ENCODE measurements at regions of chr19 and their contacts with region 1.

Region 1: DNA sequence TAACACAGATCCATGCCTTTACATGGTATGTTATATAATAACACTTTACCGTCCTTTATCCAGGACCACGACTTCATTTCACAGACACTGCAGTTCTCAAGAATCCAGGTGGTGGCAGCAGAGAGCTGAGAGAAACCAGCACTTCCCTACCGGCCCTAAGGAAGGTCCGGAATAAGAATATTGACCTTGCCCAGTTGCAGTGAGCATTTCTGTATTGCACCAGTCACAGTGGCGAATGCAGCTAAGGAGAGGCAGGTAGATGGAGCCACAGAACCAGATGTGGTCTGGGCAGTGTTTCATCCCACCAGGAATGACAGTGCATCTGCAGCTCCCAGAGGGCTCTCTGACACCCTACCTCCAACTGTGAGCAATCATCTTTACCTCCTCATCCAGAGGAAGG is 44.6 kb downstream of the ZNF787 start:
- DNase-seq: peak; percentile 50
- CTCF ChIP-seq: peak; percentile 37

Region 2: GRCh38 chr19:56170261-56170660 is 93.8 kb after region 1 on chr19:
- in situ Hi-C with region 1: loop called (anchors 10 kb)
- DNase-seq: no peak
- CTCF ChIP-seq: no peak

Region 3: DNA sequence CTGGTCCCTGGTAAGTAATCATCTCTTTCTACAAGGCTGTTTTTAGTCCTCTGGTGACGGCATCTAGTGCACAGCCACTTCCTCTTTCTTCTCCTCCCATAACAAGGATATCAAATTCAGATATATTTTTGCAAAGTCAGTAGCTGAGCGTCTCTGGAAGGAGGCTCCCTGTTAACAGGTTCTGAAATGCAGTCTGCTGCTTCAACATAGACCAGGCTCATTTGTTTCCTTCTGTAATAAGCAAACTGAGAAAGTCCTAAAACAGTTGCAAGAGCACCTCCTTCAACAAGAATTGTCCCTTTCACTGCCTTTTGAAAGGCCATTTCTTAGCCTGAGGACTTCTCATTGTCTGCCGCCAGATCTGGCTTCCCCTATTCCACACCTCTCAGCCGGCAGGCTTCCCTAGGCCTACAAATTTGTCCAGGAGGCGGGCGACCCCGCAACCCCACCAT is 245.5 kb after region 1 on chr19:
- in situ Hi-C with region 1: loop called (anchors 10 kb)
- DNase-seq: peak; percentile 36
- CTCF ChIP-seq: no peak